Gastrocnemius medialis (tissue), 4 donors: ENCODE measurements at regions of chr17 and their contacts with region 1.

Region 1: DNA sequence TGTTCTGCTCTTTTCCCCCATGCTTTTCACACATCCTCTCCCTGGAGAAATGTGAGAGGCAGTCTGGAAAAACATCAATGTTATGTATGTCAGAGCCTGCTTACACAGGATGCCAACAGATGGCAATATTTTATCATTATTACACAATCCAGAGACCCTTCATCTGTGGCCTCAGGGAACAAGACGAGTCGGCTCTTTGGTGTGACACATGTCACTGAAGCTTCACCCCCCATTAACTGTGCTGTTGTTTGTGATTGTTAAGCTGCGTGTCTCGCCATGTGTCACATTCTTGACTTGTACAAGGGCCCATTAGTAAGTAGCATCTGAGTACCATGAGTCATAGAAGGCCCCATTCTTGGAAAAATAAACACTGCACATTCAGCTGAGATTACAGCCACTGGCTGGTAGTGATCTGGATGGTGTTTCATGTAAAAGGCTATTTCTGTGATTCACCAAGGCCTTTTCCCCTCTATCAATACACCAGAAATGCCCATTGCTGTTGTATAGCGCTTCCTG is 682.1 kb upstream of the SOX9 start:
- DNase-seq: no peak
- ATAC-seq: no peak
- H3K4me3 ChIP-seq: no peak overlapping the region
- H3K27ac ChIP-seq: no peak overlapping the region
- H3K4me1 ChIP-seq: no peaks in the 10 kb centered on the region
- H3K27me3 ChIP-seq: no peaks in the 10 kb centered on the region
- CTCF ChIP-seq: no peak
- POLR2A ChIP-seq: no peak

Region 2: GRCh38 chr17:71118039-71118438 is 320.6 kb before region 1 on chr17:
- in situ Hi-C with region 1: loop called in 1 of 4 experiments (anchors 25 kb)
- intact Hi-C with region 1: no loop called
- DNase-seq: no peak
- ATAC-seq: no peak
- H3K4me3 ChIP-seq: no peak overlapping the region
- H3K27ac ChIP-seq: no peak overlapping the region
- H3K4me1 ChIP-seq: no peaks in the 10 kb centered on the region
- H3K27me3 ChIP-seq: no peaks in the 10 kb centered on the region
- CTCF ChIP-seq: peak in 2 of 5 experiments; percentile 24 to 34
- POLR2A ChIP-seq: no peak